ENCODE measurements at regions of chr3 and their contacts with region 1.

Region 1: DNA sequence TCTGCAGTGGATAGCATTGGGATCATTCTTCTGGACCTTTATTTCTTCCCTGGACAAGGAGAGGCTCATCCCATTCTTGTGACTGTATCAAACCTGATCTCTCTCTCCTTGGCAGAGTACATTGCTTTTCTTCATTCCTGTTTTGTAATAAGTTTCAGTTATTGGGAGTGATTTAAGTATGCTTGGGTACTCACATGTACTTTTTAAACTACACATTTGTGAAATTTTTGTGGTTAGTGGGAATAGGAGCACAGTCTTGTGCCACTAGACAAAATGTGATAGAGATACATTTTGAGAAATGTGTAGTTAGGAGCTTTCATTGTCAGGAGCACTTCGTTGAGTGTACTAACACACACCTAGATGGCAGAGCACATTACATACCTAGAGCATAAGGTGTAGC is 262.6 kb downstream of the C3orf38 start:
- DNase-seq: no peak
- ATAC-seq: no peak
- H3K4me3 ChIP-seq: no peak overlapping the region
- H3K4me3 Mint-ChIP-seq: no peak overlapping the region
- H3K27ac ChIP-seq: no peak overlapping the region
- H3K27ac Mint-ChIP-seq: no peak overlapping the region
- H3K4me1 ChIP-seq: peaks cover 0 to 5% of the 10 kb centered on the region in 2 experiments
- H3K4me1 Mint-ChIP-seq: peaks cover 8 to 21% (median 17%) of the 10 kb centered on the region in 3 donors
- H3K27me3 ChIP-seq: no peaks in the 10 kb centered on the region
- H3K27me3 Mint-ChIP-seq: no peaks in the 10 kb centered on the region

Region 2: GRCh38 chr3:87742250-87742649 is 670.1 kb before region 1 on chr3:
- CTCF ChIA-PET with region 1: no interaction called
- POLR2A ChIA-PET with region 1: interaction called in 1 of 2 experiments, 12 read pairs
- DNase-seq: no peak
- ATAC-seq: no peak
- H3K4me3 ChIP-seq: no peak overlapping the region
- H3K4me3 Mint-ChIP-seq: no peak overlapping the region
- H3K27ac ChIP-seq: no peak overlapping the region
- H3K27ac Mint-ChIP-seq: no peak overlapping the region
- H3K4me1 ChIP-seq: no peaks in the 10 kb centered on the region
- H3K4me1 Mint-ChIP-seq: no peaks in the 10 kb centered on the region
- H3K27me3 ChIP-seq: peaks cover 0 to 3% of the 10 kb centered on the region in 2 experiments
- H3K27me3 Mint-ChIP-seq: peaks cover 0 to 5% of the 10 kb centered on the region in 2 donors

Region 3: DNA sequence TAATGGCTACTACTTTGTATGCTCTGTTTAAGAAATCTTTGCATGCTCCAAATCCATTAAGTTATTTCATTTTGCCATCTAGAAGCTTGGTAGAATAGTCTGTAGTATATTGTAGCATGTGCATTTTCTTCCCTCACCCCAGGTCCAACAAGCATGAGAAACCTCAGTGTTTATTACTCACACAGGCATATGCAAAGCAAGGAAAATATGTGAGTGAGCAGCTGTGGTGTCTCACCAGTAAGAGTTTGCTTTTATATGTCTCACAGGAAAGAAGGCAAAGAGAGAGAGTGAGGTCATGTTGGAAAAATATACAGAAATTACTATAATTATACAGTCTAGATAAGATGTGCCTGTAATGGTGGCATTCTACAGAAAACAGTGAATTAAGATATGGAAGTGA is 49.9 kb after region 1 on chr3:
- CTCF ChIA-PET with region 1: no interaction called
- POLR2A ChIA-PET with region 1: interaction called in 1 of 2 experiments, 13 read pairs
- DNase-seq: no peak
- ATAC-seq: no peak
- H3K4me3 ChIP-seq: no peak overlapping the region
- H3K4me3 Mint-ChIP-seq: no peak overlapping the region
- H3K27ac ChIP-seq: no peak overlapping the region
- H3K27ac Mint-ChIP-seq: no peak overlapping the region
- H3K4me1 ChIP-seq: no peaks in the 10 kb centered on the region
- H3K4me1 Mint-ChIP-seq: no peaks in the 10 kb centered on the region
- H3K27me3 ChIP-seq: no peaks in the 10 kb centered on the region
- H3K27me3 Mint-ChIP-seq: no peaks in the 10 kb centered on the region